ENCODE measurements at regions of chr19 and their contacts with region 1.

Region 1: GRCh38 chr19:35775298-35776110 is at the start of gene ARHGAP33:
- DNase-seq: peak; percentile 98 to 99
- ATAC-seq: peak; percentile 78 to 90
- H3K4me3 ChIP-seq: peak within 1 kb of the TSS; percentile 62
- H3K27ac ChIP-seq: peak within 1 kb of the TSS; percentile 47 to 81
- H3K4me1 ChIP-seq: peaks cover 31% of the 10 kb centered on the region
- CTCF ChIP-seq: no peak
- EP300 ChIP-seq: no peak
- POLR2A ChIP-seq: no peak
- RAD21 ChIP-seq: 0 out of 5 replicates have a peak, but pooled peaks of 1 of the 2 experiments have one; percentile 11
- polyA plus RNA-seq, gene ARHGAP33: 0.84 and 2.1 TPM in 2 replicates

Region 2: GRCh38 chr19:35675589-35676140 is 99.8 kb before region 1 on chr19:
- CTCF ChIA-PET with region 1: no interaction called
- POLR2A ChIA-PET with region 1: no interaction called
- DNase-seq: no peak
- ATAC-seq: no peak
- H3K4me3 ChIP-seq: no peak overlapping the region
- H3K27ac ChIP-seq: no peak overlapping the region
- H3K4me1 ChIP-seq: no peaks in the 10 kb centered on the region
- CTCF ChIP-seq: no peak
- EP300 ChIP-seq: no peak
- POLR2A ChIP-seq: no peak
- RAD21 ChIP-seq: no peak

Region 3: DNA sequence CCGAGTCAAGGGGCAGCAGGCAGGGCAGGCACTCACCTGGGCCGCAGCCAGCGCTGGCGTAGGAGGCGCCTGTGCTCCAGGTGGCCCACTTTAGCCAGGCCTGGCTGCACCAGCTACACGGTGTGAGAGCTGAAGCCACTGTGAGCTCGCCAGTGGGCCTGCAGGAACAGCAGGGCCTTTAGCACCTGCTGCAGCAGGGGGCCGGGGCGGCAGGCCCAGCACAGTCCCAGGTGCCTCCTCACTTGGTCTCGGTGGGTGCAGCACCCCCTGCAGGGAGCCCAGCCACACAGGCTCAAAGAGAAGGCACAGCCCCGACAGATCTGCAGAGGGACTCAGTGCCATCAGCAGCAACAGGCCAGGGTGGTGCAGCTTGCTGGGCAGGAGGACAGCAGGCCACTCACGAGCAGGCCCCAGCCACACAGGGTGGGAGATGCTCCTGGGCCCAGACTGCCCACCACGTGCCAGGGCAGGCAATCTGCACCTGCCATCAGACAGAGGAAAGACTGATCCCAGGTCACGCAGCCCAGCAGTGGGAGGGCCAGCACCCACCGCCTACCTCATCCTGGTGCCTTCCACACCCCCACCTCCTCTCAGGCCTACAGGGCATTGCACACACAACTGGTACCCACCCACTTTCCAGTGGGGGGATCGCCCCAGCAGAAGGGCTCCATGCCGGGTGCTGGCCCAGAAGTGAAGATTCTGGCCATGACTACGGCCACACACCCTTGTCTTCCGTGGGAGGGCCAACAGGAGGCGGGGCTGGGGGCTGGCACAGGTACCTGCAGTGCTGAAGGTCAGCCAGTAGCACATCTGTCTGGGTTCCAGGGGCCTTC is 15.7 kb after region 1 on chr19:
- CTCF ChIA-PET with region 1: interaction called, 23 read pairs
- POLR2A ChIA-PET with region 1: no interaction called
- DNase-seq: peak in 1 of 2 experiments; percentile 38
- ATAC-seq: peak; percentile 28 to 71; a peak in 4 of 6 replicates
- H3K4me3 ChIP-seq: no peak overlapping the region
- H3K27ac ChIP-seq: no peak overlapping the region
- H3K4me1 ChIP-seq: peaks cover 8% of the 10 kb centered on the region
- CTCF ChIP-seq: peak; percentile 24; the same call in 2 of the 3 replicates
- EP300 ChIP-seq: no peak
- POLR2A ChIP-seq: no peak
- RAD21 ChIP-seq: no peak